A549 (cell line): ENCODE measurements at regions of chr3 and their contacts with region 1.

Region 1: DNA sequence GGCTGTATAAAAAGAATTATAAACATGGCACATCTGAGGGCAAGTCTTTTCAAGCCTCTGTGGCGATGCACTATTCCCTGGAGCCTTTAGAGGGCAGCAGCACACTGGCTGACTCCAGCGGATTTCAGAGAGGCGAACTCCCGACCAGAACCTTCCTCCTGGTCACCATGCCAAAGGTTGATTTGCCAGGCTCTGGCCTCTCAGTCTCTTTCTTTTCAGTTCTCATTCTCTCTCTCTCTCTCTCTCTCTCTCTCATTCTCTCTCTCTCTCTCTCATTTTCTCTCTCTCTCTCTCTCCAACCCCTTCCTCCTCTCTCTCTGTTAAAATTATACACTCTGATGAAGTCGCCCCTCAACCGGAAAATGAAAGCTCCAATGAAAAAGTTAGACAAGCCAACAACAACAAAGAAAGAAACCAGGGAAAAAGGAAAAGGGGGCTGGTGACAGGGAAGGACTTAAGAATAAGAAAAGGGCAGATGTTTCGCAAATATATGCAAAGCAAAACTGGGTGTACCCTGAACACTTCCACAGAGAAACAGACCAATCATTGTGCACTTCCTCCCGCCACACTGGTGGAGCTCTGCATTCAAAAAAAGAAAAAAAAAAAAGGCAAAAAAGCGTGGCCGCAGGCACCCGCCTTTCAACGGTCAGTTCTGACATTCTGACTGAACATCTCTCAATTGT is 90.2 kb downstream of the TIGIT start:
- DNase-seq: peak; percentile 55 to 72
- ATAC-seq: peak; percentile 89 to 96
- H3K4me3 ChIP-seq: no peak overlapping the region
- H3K27ac ChIP-seq: peak overlapping the region in 1 of 2 experiments; percentile 70; a peak in 3 of 6 replicates
- H3K4me1 ChIP-seq: peaks cover 6% of the 10 kb centered on the region; the same call in 1 of the 3 replicates
- CTCF ChIP-seq: peak; percentile 88
- EP300 ChIP-seq: no peak
- POLR2A ChIP-seq: no peak
- RAD21 ChIP-seq: peak; percentile 85 to 88

Region 2: DNA sequence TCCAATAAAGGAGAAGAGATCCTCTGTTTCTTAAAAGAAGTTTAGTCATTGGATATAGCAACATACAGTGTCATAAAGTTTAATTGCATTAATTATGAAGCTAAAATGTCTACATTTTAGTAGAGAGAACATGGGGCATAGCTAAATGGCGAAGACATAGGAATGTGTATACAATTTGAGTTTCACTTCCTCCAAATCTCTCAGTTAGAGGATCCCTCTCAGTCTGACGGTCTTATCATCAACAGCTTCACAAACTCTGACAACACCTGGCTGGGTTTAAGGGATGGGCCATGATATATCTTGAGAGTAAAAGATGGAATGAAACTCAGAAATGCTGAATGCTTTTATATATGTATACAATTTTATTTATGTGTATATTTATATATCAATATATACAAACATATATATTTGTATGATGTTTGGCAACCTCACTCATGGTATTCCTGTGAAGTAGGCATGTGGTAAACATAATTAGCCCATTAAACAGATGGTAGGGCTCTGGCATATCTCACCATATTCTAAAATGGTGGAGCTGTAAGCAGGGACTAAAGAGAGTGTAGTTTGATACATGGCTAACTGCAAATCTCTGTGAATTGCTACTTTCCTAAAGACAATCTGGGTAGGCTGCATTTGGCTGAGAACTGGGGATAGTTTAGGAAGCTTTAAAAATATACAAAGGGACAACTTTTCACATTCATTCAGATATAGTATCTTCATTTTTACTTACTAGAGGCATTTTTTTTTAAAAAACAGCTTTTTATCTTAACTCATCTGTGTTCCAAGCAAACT is 21.4 kb after region 1 on chr3:
- CTCF ChIA-PET with region 1: interaction called, 61 read pairs
- POLR2A ChIA-PET with region 1: no interaction called
- DNase-seq: no peak
- ATAC-seq: no peak
- H3K4me3 ChIP-seq: no peak overlapping the region
- H3K27ac ChIP-seq: no peak overlapping the region
- H3K4me1 ChIP-seq: no peaks in the 10 kb centered on the region
- CTCF ChIP-seq: no peak
- EP300 ChIP-seq: no peak
- POLR2A ChIP-seq: no peak
- RAD21 ChIP-seq: no peak

Region 3: GRCh38 chr3:114411811-114412803 is 28.1 kb after region 1 on chr3:
- CTCF ChIA-PET with region 1: interaction called, 24 read pairs
- POLR2A ChIA-PET with region 1: no interaction called
- DNase-seq: peak; percentile 7 to 50
- ATAC-seq: peak; percentile 89 to 93
- H3K4me3 ChIP-seq: no peak overlapping the region
- H3K27ac ChIP-seq: peak overlapping the region in 1 of 2 experiments; percentile 61; a peak in 4 of 6 replicates
- H3K4me1 ChIP-seq: peaks cover 27% of the 10 kb centered on the region
- CTCF ChIP-seq: no peak
- EP300 ChIP-seq: no peak
- POLR2A ChIP-seq: no peak
- RAD21 ChIP-seq: no peak

Region 4: DNA sequence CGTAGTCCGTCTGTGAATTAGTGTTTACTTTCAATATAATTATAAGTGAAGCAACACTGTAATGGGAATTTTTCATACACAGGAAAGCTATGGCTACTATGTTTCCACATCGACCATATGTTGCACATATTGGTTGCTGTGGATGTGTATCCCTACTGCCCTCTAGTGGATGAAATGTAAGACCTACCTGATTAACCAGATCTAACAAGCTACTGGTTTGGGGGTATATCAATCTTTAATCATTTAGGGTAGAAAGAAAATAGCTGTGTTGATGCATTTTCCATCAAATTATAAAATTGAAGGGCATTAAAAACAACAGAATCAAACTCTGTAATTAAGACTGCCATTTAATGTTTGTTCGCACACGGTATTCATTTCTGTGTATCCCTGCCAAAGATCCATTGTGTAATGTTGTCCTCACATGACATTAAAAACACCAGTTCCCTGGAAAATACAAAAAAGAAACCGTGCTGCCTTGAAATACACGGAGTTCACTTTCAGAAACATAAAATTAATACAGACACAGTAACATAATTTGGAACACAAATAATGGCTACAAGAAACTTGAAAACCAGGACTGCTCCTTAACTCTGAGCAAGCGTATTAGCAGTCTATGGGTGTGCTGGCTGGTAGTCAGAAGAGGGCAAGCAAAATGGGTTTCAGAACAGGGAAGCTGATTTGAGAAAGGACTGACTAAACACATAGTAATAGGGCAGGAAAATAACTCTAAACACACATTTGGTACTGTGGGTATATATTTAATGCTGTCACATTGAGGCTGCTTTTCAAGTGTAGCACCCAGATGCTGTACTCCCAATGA is 34.9 kb after region 1 on chr3:
- CTCF ChIA-PET with region 1: interaction called, 50 read pairs
- POLR2A ChIA-PET with region 1: no interaction called
- DNase-seq: peak; percentile 33 to 73
- ATAC-seq: peak; percentile 90 to 95; a peak in 5 of 6 replicates
- H3K4me3 ChIP-seq: no peak overlapping the region
- H3K27ac ChIP-seq: no peak overlapping the region
- H3K4me1 ChIP-seq: peaks cover 4% of the 10 kb centered on the region; the same call in 2 of the 3 replicates
- CTCF ChIP-seq: peak; percentile 92
- EP300 ChIP-seq: no peak
- POLR2A ChIP-seq: no peak
- RAD21 ChIP-seq: peak; percentile 61 to 62

Region 5: GRCh38 chr3:115092220-115092791 is 708.3 kb after region 1 on chr3:
- CTCF ChIA-PET with region 1: interaction called, 10 read pairs
- POLR2A ChIA-PET with region 1: no interaction called
- DNase-seq: peak; percentile 38 to 74
- ATAC-seq: peak; percentile 100
- H3K4me3 ChIP-seq: no peak overlapping the region
- H3K27ac ChIP-seq: no peak overlapping the region
- H3K4me1 ChIP-seq: no peaks in the 10 kb centered on the region
- CTCF ChIP-seq: peak; percentile 59
- EP300 ChIP-seq: no peak
- POLR2A ChIP-seq: no peak
- RAD21 ChIP-seq: peak; percentile 64 to 70; a peak in 4 of 5 replicates